Esophagus muscularis mucosa (tissue), 4 donors: ENCODE measurements at regions of chr13 and their contacts with region 1.

Region 1: DNA sequence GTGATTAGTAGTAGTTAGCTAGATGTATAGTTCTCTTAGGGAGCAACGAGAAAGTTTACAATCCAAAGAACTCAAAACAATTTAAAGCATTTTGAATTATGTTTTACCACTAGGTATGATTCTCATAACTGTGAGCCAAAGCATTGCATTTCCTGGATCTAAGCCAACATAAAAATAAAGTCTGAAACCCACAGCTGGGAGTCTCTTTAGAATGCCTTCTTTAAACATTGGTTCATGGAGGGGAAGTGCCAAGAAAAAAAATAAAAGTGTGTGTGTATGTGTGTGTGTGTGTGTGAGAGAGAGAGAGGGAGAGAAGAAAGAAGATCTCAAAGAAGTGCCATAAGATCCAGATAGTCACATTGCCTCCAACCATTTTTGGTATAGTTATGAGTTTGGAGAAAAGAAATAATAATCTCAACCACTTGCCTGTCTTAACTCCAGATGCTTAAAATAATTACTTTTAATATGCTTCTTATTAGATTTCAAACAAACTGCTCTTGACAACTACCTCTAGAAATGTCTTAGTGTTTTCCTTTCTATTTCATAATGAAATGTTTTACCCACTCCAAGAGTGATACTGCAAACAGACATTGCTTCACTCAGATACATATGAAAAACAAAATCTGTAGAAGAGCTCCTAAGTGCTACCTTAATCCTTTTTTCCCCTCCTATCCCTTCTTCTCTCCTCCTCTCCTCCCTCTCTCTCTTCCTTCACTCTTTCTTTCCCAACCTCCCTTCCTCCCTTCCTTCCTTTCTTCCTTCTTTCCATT is 554.1 kb downstream of the KCTD12 start:
- DNase-seq: no peak
- H3K4me3 ChIP-seq: no peak overlapping the region
- H3K27ac ChIP-seq: peak overlapping the region; percentile 44 to 75 (median 56)
- H3K4me1 ChIP-seq: peaks cover 4 to 72% (median 69%) of the 10 kb centered on the region in 4 donors
- H3K27me3 ChIP-seq: no peaks in the 10 kb centered on the region
- CTCF ChIP-seq: no peak
- EP300 ChIP-seq: no peak
- POLR2A ChIP-seq: no peak

Region 2: GRCh38 chr13:75910591-75910990 is 421.5 kb before region 1 on chr13:
- intact Hi-C with region 1: loop called (anchors 10 kb)
- DNase-seq: no peak
- H3K4me3 ChIP-seq: no peak overlapping the region
- H3K27ac ChIP-seq: peak overlapping the region; percentile 52 to 79 (median 65)
- H3K4me1 ChIP-seq: peaks cover 15 to 73% (median 70%) of the 10 kb centered on the region in 4 donors
- H3K27me3 ChIP-seq: no peaks in the 10 kb centered on the region
- CTCF ChIP-seq: no peak
- EP300 ChIP-seq: no peak
- POLR2A ChIP-seq: no peak

Region 3: DNA sequence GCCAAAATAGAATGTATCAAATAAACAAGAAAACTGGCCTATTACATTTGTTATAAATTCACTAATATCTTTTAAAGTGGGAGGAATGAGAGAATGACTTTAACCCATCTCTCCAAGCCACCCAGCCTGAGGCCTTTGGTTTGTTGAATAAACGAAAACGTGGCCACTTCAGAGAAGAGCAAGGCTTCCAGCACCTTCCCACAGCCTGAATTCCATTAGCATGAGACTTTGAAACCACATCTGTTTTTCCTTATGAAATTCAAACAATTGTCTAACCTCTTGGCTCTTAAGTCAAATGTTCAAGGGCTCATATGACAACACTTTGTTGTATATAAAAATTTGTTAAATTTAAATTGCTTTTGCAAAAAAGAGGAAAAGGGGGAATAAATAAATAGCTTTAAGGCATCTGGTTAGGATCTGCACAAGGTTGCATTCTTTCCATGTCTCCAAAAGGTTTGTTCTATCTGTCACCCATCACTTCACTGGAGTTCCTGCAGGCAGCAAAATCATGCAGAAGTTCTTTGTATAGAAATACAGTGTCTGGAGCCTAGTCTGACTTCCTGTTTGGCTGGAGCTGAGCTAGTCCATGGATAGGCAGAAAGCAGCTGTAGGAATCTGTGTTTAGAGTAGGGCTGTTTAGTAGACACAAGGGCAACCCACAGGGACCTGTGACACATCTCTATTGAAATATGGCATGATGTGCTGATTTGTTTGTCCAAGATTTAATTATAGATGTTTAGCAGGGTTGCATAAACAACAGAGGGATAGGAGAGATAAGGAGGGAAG is 51.7 kb after region 1 on chr13:
- intact Hi-C with region 1: loop called (anchors 2 kb)
- DNase-seq: no peak
- H3K4me3 ChIP-seq: no peak overlapping the region
- H3K27ac ChIP-seq: peak overlapping the region; percentile 41 to 76 (median 66)
- H3K4me1 ChIP-seq: peaks cover 5 to 49% (median 46%) of the 10 kb centered on the region in 4 donors
- H3K27me3 ChIP-seq: no peaks in the 10 kb centered on the region
- CTCF ChIP-seq: no peak
- EP300 ChIP-seq: no peak
- POLR2A ChIP-seq: no peak